Activated naive CD4-positive, alpha-beta T cell treated with anti-CD3 and anti-CD28 coated beads for 36 hours (primary cell): ENCODE measurements at regions of chr21 and their contacts with region 1.

Region 1: GRCh38 chr21:36141513-36141925 is 6.6 kb downstream of the CBR3 start:
- DNase-seq: peak; percentile 95
- H3K4me3 Mint-ChIP-seq: no peak overlapping the region
- H3K27ac Mint-ChIP-seq: peak overlapping the region; percentile 0
- H3K4me1 Mint-ChIP-seq: peaks cover 20% of the 10 kb centered on the region
- H3K27me3 Mint-ChIP-seq: no peaks in the 10 kb centered on the region

Region 2: DNA sequence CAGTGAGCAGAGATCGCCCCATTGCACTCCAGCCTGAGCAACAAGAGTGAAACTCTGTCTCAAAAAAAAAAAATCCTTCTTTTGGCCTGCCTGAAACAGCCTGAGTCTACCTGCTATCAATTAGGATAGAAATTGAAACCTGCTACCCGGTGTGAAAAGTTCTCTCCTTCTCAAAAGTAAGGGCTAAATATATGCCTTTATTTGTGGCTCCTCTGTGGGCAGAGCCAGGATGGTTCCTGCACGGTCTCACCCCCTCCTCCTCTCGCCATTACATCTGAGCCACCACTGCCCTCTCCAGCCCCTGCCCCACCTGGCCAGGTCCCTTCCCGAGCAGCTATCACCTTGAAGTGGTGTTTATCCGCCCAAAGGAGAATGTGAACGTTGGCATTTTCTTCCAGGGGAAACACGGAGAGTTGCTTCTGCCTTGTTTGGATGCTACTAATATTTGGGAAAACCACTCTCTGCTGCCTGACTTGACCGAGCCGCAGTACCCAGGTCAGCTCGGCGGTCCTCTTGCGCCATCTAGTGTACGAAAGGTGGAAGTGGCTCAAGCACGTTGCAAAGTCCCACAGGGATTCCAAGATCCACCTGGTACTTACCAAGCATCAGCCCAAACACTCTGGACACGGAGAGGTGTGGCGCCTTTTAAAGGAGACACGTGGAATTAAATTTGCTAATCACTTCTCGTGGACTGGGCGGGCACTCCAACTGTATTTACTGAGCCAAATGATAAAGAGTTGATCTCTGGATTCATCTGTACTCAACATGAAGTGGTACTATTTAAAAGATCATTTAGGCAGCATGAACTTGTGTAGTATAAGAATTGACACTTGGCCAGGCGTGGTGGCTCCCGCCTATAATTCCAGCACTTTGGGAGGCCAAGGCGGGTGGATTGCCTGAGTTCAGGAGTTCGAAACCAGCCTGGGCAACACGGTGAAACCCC is 113.1 kb before region 1 on chr21:
- CTCF ChIA-PET with region 1: no interaction called
- intact Hi-C with region 1: no loop called
- DNase-seq: peak; percentile 78
- H3K4me3 Mint-ChIP-seq: no peak overlapping the region
- H3K27ac Mint-ChIP-seq: no peak overlapping the region
- H3K4me1 Mint-ChIP-seq: peaks cover 5% of the 10 kb centered on the region
- H3K27me3 Mint-ChIP-seq: no peaks in the 10 kb centered on the region

Region 3: DNA sequence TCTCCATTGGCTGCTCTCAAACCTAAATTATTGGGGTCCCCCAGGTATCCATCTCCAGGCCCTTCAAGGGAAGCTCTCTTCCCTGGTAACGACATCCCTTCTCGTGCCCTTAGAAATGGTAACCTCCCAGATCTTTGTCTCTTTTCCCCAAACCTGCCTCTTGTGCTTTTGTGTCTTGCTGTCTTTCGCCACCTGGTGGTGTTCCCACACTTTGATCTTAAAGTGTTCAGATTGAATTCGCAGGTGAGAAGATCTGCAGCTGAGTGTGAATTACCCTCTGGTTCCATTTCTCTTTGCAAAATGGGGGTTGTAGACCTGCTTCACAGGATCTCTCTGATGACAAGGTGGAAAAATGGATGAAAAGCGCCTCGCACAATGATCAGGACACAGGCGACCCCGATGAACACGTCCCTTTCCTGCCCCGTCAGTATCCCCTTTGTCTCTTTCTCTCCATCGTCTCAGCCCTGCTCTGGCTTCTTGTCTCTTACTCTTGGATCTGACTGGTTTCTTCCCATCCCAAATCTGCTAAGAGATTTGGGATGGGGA is 68.2 kb after region 1 on chr21:
- CTCF ChIA-PET with region 1: interaction called, 11 read pairs
- intact Hi-C with region 1: loop called (anchors 1 kb)
- DNase-seq: peak; percentile 71
- H3K4me3 Mint-ChIP-seq: no peak overlapping the region
- H3K27ac Mint-ChIP-seq: no peak overlapping the region
- H3K4me1 Mint-ChIP-seq: peaks cover 12% of the 10 kb centered on the region
- H3K27me3 Mint-ChIP-seq: no peaks in the 10 kb centered on the region

Region 4: DNA sequence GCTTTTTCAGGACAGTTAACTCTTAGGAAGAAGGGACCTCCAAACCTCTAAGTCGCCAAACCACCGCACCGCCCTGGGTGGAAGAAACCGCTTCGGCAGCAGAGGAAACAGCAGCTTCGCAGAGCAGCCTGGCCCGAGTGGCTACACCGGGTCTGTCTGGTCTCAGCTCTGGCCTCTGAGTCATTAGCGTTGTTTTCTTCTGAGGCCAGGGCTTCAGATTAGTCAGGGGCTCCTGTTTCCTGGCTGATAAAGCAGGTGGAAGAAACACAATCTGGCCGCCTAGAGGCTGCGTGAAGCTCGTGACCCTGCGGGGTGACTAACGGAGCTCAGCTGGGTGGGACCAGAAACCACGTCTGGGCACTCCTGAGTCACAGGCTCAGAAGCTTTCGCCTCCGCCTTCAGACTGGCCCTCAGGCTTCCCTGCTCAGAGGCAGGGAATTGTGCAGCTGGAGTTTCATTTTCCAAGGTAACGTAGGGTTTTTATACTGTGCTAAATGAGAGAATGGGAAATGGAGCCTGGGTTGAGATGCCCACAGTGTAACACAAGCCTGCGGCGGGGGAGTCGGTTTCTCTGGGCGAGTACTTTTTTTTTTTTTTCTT is 288.5 kb after region 1 on chr21:
- CTCF ChIA-PET with region 1: interaction called, 6 read pairs
- intact Hi-C with region 1: loop called (anchors 2 kb)
- DNase-seq: peak; percentile 89
- H3K4me3 Mint-ChIP-seq: peak overlapping the region; percentile 54
- H3K27ac Mint-ChIP-seq: peak overlapping the region; percentile 27
- H3K4me1 Mint-ChIP-seq: peaks cover 14% of the 10 kb centered on the region
- H3K27me3 Mint-ChIP-seq: peaks cover 27% of the 10 kb centered on the region

Region 5: GRCh38 chr21:36692835-36693488 is 551.4 kb after region 1 on chr21:
- CTCF ChIA-PET with region 1: no interaction called
- intact Hi-C with region 1: no loop called
- DNase-seq: no peak
- H3K4me3 Mint-ChIP-seq: no peak overlapping the region
- H3K27ac Mint-ChIP-seq: no peak overlapping the region
- H3K4me1 Mint-ChIP-seq: peaks cover 14% of the 10 kb centered on the region
- H3K27me3 Mint-ChIP-seq: peaks cover 77% of the 10 kb centered on the region

Region 6: GRCh38 chr21:36706951-36707762 is 565.6 kb after region 1 on chr21:
- CTCF ChIA-PET with region 1: no interaction called
- intact Hi-C with region 1: loop called (anchors 10 kb)
- DNase-seq: peak; percentile 52
- H3K4me3 Mint-ChIP-seq: no peak overlapping the region
- H3K27ac Mint-ChIP-seq: no peak overlapping the region
- H3K4me1 Mint-ChIP-seq: peaks cover 49% of the 10 kb centered on the region
- H3K27me3 Mint-ChIP-seq: peaks cover 80% of the 10 kb centered on the region